Spleen (tissue), 13 donors: ENCODE measurements at regions of chr7 and their contacts with region 1.

Region 1: GRCh38 chr7:81469869-81470723 is 299.8 kb downstream of the HGF start:
- DNase-seq: no peak
- H3K4me3 ChIP-seq: no peak overlapping the region
- H3K27ac ChIP-seq: no peak overlapping the region
- H3K4me1 ChIP-seq: no peaks in the 10 kb centered on the region
- H3K27me3 ChIP-seq: no peaks in the 10 kb centered on the region
- CTCF ChIP-seq: peak in 9 of 11 experiments; percentile 5 to 51 (median 42)
- POLR2A ChIP-seq: no peak

Region 2: GRCh38 chr7:80699045-80699638 is 771.0 kb before region 1 on chr7:
- intact Hi-C with region 1: loop called (anchors 5 kb)
- DNase-seq: no peak
- H3K4me3 ChIP-seq: no peak overlapping the region
- H3K27ac ChIP-seq: no peak overlapping the region
- H3K4me1 ChIP-seq: peaks cover 0 to 12% (median 7%) of the 10 kb centered on the region in 6 donors
- H3K27me3 ChIP-seq: no peaks in the 10 kb centered on the region
- CTCF ChIP-seq: peak; percentile 28 to 76 (median 60)
- POLR2A ChIP-seq: no peak